A549 (cell line): ENCODE measurements at regions of chr19 and their contacts with region 1.

Region 1: GRCh38 chr19:40305403-40305802 is 20.3 kb upstream of the AKT2 start:
- DNase-seq: peak; percentile 96 to 99
- ATAC-seq: peak; percentile 94 to 96
- H3K4me3 ChIP-seq: no peak overlapping the region
- H3K27ac ChIP-seq: no peak overlapping the region
- H3K4me1 ChIP-seq: no peaks in the 10 kb centered on the region
- CTCF ChIP-seq: peak; percentile 100
- EP300 ChIP-seq: no peak
- POLR2A ChIP-seq: no peak
- RAD21 ChIP-seq: peak; percentile 95 to 98

Region 2: DNA sequence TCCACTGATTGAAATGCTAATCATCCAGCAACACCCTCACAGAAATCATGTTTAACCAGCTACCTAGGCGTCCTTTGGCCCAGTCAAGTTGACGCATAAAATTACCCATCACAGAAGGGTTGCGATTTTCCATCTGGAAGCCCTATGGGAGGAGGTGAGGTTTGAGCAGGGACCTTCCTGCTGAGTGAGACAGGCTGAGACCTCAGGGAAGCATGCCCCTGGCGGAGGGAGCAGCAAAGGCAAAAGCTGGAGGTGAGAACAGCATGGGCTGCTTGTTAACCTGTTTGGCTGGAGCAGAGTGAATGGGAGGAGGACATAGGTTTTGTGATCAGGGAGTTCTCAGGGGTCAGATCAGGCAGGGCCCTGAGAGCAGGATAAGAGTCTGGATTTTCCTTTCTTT is 94.5 kb before region 1 on chr19:
- CTCF ChIA-PET with region 1: no interaction called
- POLR2A ChIA-PET with region 1: no interaction called
- DNase-seq: no peak
- ATAC-seq: peak in 1 of 2 experiments; percentile 26; a peak in 2 of 6 replicates
- H3K4me3 ChIP-seq: no peak overlapping the region
- H3K27ac ChIP-seq: no peak overlapping the region
- H3K4me1 ChIP-seq: no peaks in the 10 kb centered on the region
- CTCF ChIP-seq: no peak
- EP300 ChIP-seq: no peak
- POLR2A ChIP-seq: no peak
- RAD21 ChIP-seq: no peak

Region 3: GRCh38 chr19:40285353-40286234 is 19.8 kb before region 1 on chr19:
- CTCF ChIA-PET with region 1: interaction called, 86 read pairs
- POLR2A ChIA-PET with region 1: no interaction called
- DNase-seq: peak; percentile 100
- ATAC-seq: peak; percentile 86 to 95
- H3K4me3 ChIP-seq: peak overlapping the region; percentile 86
- H3K27ac ChIP-seq: peak overlapping the region; percentile 78 to 90
- H3K4me1 ChIP-seq: peaks cover 17% of the 10 kb centered on the region
- CTCF ChIP-seq: no peak
- EP300 ChIP-seq: no peak
- POLR2A ChIP-seq: peak; percentile 74
- RAD21 ChIP-seq: no peak

Region 4: GRCh38 chr19:40331069-40331468 is 25.7 kb after region 1 on chr19:
- CTCF ChIA-PET with region 1: interaction called, 45 read pairs
- POLR2A ChIA-PET with region 1: no interaction called
- DNase-seq: no peak
- ATAC-seq: no peak
- H3K4me3 ChIP-seq: no peak overlapping the region
- H3K27ac ChIP-seq: no peak overlapping the region
- H3K4me1 ChIP-seq: no peaks in the 10 kb centered on the region
- CTCF ChIP-seq: no peak
- EP300 ChIP-seq: no peak
- POLR2A ChIP-seq: no peak
- RAD21 ChIP-seq: no peak

Region 5: DNA sequence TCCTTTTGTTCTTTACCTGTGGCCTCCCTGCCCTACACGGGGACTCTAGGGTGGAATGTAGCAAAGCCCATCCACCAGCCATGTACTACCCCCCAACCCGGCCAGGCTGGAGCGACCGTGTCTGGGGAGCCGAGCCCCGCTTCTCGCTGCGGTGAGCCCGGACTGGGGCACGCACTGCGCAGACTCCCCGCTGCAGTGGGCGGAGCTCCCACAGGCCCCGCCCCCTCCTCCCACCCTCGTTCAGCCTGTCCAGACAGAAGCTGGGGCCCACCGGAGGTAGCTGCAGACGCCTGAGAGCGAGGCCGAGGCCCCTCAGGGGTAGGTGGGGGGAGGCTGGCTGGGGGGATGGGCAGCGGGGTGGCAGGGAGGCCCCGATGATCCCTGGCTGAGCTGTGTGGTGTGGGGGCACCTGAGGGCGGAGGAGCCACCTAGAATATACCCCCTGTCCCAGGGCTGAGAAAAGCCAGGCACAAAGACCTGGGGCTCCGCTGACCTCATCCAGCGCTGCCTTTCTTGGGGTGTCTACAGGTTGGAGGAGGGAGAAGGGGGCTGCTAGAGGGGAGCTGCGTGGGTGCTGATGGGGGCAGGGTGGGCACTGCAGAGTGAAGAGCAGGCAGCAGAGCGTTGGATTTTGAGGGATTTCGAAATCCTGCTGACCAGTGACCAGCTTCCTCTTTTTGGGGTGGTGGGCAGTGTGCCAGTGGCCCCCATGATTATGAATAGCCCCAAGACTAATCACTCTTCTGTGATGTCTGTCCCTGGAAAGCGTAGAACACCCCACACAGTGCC is 60.4 kb after region 1 on chr19:
- CTCF ChIA-PET with region 1: interaction called, 36 read pairs
- POLR2A ChIA-PET with region 1: interaction called, 8 read pairs
- DNase-seq: peak; percentile 70 to 96
- ATAC-seq: peak; percentile 72 to 90
- H3K4me3 ChIP-seq: peak overlapping the region; percentile 31
- H3K27ac ChIP-seq: peak overlapping the region; percentile 30 to 78
- H3K4me1 ChIP-seq: peaks cover 16% of the 10 kb centered on the region
- CTCF ChIP-seq: no peak
- EP300 ChIP-seq: no peak
- POLR2A ChIP-seq: peak; percentile 87
- RAD21 ChIP-seq: no peak

Region 6: DNA sequence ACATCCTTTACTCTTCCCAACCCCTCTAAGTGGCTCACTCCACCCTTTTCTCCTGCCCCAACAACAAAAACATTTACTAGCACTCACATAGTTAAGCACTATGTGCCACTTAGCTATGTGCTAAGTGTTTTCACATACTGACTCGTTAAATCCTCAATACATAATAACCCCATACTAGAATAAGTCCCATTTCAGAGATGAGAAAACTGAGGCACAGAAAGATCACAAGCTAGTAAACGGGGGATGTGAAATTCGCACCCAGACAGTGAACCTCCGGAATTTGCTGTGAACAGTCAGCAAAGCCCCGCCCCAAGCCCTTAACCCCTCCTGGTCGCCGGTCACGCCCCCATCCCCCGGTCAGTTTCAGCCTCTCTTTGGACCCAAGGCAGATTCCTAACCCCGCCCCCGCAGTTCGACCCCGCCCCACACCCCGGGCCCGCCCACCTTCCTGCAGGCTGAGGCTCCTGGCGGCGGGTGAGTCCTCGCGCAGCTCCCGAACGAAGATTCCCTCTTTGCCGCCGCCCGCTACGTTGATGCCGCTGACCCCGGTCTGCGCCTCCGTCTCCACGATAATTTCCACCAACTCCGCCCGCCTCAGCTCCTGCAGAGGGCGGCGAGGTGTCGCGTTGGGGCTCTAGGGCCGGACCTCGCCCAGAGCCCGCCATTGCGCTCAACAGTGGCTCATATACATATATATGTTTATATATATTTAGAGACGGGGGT is 98.0 kb after region 1 on chr19:
- CTCF ChIA-PET with region 1: interaction called, 18 read pairs
- POLR2A ChIA-PET with region 1: interaction called, 5 read pairs
- DNase-seq: peak; percentile 98 to 100
- ATAC-seq: peak; percentile 83 to 92
- H3K4me3 ChIP-seq: peak overlapping the region; percentile 61
- H3K27ac ChIP-seq: peak overlapping the region; percentile 66 to 84
- H3K4me1 ChIP-seq: peaks cover 10% of the 10 kb centered on the region
- CTCF ChIP-seq: no peak
- EP300 ChIP-seq: no peak
- POLR2A ChIP-seq: peak; percentile 57
- RAD21 ChIP-seq: no peak

Region 7: GRCh38 chr19:40465557-40466150 is 160.3 kb after region 1 on chr19 and contains the start of gene BLVRB:
- CTCF ChIA-PET with region 1: interaction called, 30 read pairs
- POLR2A ChIA-PET with region 1: no interaction called
- DNase-seq: peak; percentile 98 to 100
- ATAC-seq: peak; percentile 73 to 88
- H3K4me3 ChIP-seq: peak within 1 kb of the TSS; percentile 62
- H3K27ac ChIP-seq: peak within 1 kb of the TSS; percentile 86 to 89
- H3K4me1 ChIP-seq: peaks cover 38% of the 10 kb centered on the region
- CTCF ChIP-seq: no peak
- EP300 ChIP-seq: no peak
- POLR2A ChIP-seq: peak; percentile 95
- RAD21 ChIP-seq: no peak
- polyA plus RNA-seq, gene BLVRB: 202 and 241 TPM in 2 replicates

Region 8: GRCh38 chr19:40603389-40604135 is 298.2 kb after region 1 on chr19:
- CTCF ChIA-PET with region 1: interaction called, 10 read pairs
- POLR2A ChIA-PET with region 1: no interaction called
- DNase-seq: peak; percentile 99 to 100
- ATAC-seq: peak; percentile 41 to 80
- H3K4me3 ChIP-seq: peak overlapping the region; percentile 36
- H3K27ac ChIP-seq: peak overlapping the region; percentile 55 to 85
- H3K4me1 ChIP-seq: peaks cover 58% of the 10 kb centered on the region
- CTCF ChIP-seq: peak; percentile 20; the same call in 1 of the 3 replicates
- EP300 ChIP-seq: no peak
- POLR2A ChIP-seq: peak; percentile 20; the same call in 1 of the 2 replicates
- RAD21 ChIP-seq: no peak; a peak in 1 of 5 replicates